PC-9 (cell line): ENCODE measurements at regions of chr3 and their contacts with region 1.

Region 1: GRCh38 chr3:197959898-197960693 is at the start of gene LMLN:
- DNase-seq: peak; percentile 94 to 99
- H3K4me3 ChIP-seq: peak within 1 kb of the TSS; percentile 70
- H3K27ac ChIP-seq: peak within 1 kb of the TSS; percentile 57
- H3K4me1 ChIP-seq: peaks cover 49% of the 10 kb centered on the region
- H3K27me3 ChIP-seq: no peaks in the 10 kb centered on the region
- CTCF ChIP-seq: no peak
- total RNA-seq, gene LMLN: 19.8 and 21.1 TPM in 2 replicates

Region 2: GRCh38 chr3:197989651-197990050 is 29.6 kb after region 1 on chr3:
- CTCF ChIA-PET with region 1: interaction called, 10 read pairs
- POLR2A ChIA-PET with region 1: no interaction called
- intact Hi-C with region 1: no loop called
- DNase-seq: peak in 1 of 2 experiments; percentile 25
- H3K4me3 ChIP-seq: no peak overlapping the region
- H3K27ac ChIP-seq: no peak overlapping the region
- H3K4me1 ChIP-seq: no peaks in the 10 kb centered on the region
- H3K27me3 ChIP-seq: no peaks in the 10 kb centered on the region
- CTCF ChIP-seq: no peak

Region 3: DNA sequence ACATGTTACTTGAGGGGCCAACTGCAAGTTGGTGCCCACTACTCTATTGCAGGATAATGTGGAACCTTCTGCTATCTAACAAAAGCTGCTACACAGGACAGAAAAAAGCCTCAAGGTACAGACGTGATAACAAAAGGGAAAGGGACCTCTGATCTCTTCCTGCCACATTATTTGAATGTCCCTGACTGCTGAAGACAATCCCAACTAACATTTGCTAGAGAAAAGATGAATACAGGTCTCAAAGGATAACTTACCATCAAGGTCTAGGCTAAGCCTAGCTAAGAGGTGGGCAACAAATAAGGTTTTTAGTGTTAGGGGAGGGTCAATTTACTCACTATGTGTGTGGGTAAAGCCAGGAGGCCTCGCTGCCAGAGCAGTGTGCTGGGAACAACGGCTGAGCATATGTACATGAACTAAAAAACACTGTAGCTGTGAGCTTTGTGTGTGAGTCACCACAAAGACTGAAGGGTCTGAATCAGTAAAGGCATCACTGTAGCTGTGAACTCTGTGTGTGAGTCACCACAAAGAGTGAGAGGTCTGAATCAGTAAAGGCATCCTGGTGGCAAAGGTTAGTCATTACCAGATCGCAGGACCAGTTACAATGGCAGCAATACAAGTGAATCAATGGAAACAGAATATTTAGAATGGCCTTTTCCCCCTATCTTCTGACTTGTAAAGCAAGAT is 111.6 kb after region 1 on chr3:
- CTCF ChIA-PET with region 1: interaction called, 12 read pairs
- POLR2A ChIA-PET with region 1: interaction called, 4 read pairs
- intact Hi-C with region 1: loop called (anchors 5 kb)
- DNase-seq: peak; percentile 75 to 100
- H3K4me3 ChIP-seq: no peak overlapping the region
- H3K27ac ChIP-seq: peak overlapping the region; percentile 72
- H3K4me1 ChIP-seq: peaks cover 16% of the 10 kb centered on the region
- H3K27me3 ChIP-seq: no peaks in the 10 kb centered on the region
- CTCF ChIP-seq: peak; percentile 68